Gastrocnemius medialis (tissue), 4 donors: ENCODE measurements at regions of chr6 and their contacts with region 1.

Region 1: GRCh38 chr6:108235127-108235526 is 25.7 kb downstream of the SNX3 start:
- DNase-seq: peak in 1 of 2 donors; percentile 35
- ATAC-seq: peak in 1 of 2 donors; percentile 24
- H3K4me3 ChIP-seq: no peak overlapping the region
- H3K27ac ChIP-seq: no peak overlapping the region
- H3K4me1 ChIP-seq: peaks cover 9 to 14% of the 10 kb centered on the region in 2 donors
- H3K27me3 ChIP-seq: no peaks in the 10 kb centered on the region
- CTCF ChIP-seq: no peak
- POLR2A ChIP-seq: no peak

Region 2: GRCh38 chr6:108175592-108176279 is 59.4 kb before region 1 on chr6:
- in situ Hi-C with region 1: no loop called
- intact Hi-C with region 1: loop called (anchors 2 kb)
- DNase-seq: no peak
- ATAC-seq: no peak
- H3K4me3 ChIP-seq: peak overlapping the region; percentile 21 to 44 (median 30)
- H3K27ac ChIP-seq: no peak overlapping the region
- H3K4me1 ChIP-seq: peaks cover 13 to 15% of the 10 kb centered on the region in 2 donors
- H3K27me3 ChIP-seq: peaks cover 81 to 90% (median 84%) of the 10 kb centered on the region in 3 donors
- CTCF ChIP-seq: peak in 1 of 5 experiments; percentile 29
- POLR2A ChIP-seq: no peak